ENCODE measurements at regions of chr20 and their contacts with region 1.

Region 1: DNA sequence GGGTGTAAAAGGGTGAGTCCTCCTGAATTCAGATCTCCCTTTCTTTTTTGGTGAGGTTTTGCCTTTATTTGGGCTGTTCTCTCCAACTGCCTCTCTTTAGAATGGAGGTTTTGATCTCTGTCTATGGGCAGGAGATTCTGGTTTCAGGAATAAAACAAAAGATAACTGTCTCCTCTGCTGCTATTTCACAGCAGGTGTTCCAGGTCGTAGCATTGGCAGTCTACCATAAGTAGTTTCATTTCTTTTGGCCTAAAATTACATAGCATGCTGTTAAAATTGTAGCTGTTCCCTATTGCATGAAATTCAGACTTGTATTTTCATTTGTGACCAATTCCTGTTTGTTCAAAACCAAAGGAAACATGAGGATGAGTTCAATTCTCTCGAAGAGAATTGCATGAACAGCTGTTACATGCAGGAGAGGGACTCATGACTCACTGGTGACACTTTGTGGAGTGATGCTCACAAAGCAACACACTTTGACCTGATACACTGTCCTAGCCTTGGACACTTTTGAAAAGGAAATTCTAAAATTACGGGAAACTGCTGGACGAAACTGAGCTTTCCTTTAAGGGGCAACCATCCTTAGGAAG is 76.8 kb upstream of the SIRPG start:
- DNase-seq: no peak
- H3K4me3 ChIP-seq: no peak overlapping the region
- H3K4me3 Mint-ChIP-seq: no peak overlapping the region
- H3K27ac Mint-ChIP-seq: no peak overlapping the region
- H3K4me1 ChIP-seq: no peaks in the 10 kb centered on the region
- H3K4me1 Mint-ChIP-seq: no peaks in the 10 kb centered on the region
- H3K27me3 ChIP-seq: no peaks in the 10 kb centered on the region; the same call in 1 of the 2 replicates
- H3K27me3 Mint-ChIP-seq: peaks cover 17% of the 10 kb centered on the region
- CTCF ChIP-seq: peak in 1 of 2 experiments; percentile 13

Region 2: GRCh38 chr20:1535420-1536175 is 198.8 kb before region 1 on chr20:
- CTCF ChIA-PET with region 1: interaction called, 3 read pairs
- POLR2A ChIA-PET with region 1: no interaction called
- intact Hi-C with region 1: loop called (anchors 10 kb)
- DNase-seq: no peak
- H3K4me3 ChIP-seq: no peak overlapping the region
- H3K4me3 Mint-ChIP-seq: no peak overlapping the region
- H3K27ac Mint-ChIP-seq: no peak overlapping the region
- H3K4me1 ChIP-seq: no peaks in the 10 kb centered on the region
- H3K4me1 Mint-ChIP-seq: no peaks in the 10 kb centered on the region
- H3K27me3 ChIP-seq: no peaks in the 10 kb centered on the region
- H3K27me3 Mint-ChIP-seq: peaks cover 16% of the 10 kb centered on the region
- CTCF ChIP-seq: no peak

Region 3: GRCh38 chr20:1764136-1765033 is 30.0 kb after region 1 on chr20:
- CTCF ChIA-PET with region 1: no interaction called
- POLR2A ChIA-PET with region 1: no interaction called
- intact Hi-C with region 1: no loop called
- DNase-seq: peak; percentile 77 to 83
- H3K4me3 ChIP-seq: no peak overlapping the region
- H3K4me3 Mint-ChIP-seq: no peak overlapping the region
- H3K27ac Mint-ChIP-seq: no peak overlapping the region
- H3K4me1 ChIP-seq: no peaks in the 10 kb centered on the region
- H3K4me1 Mint-ChIP-seq: no peaks in the 10 kb centered on the region
- H3K27me3 ChIP-seq: no peaks in the 10 kb centered on the region
- H3K27me3 Mint-ChIP-seq: peaks cover 9% of the 10 kb centered on the region
- CTCF ChIP-seq: peak; percentile 80 to 92

Region 4: GRCh38 chr20:2289471-2289872 is 555.1 kb after region 1 on chr20:
- CTCF ChIA-PET with region 1: no interaction called
- POLR2A ChIA-PET with region 1: no interaction called
- intact Hi-C with region 1: no loop called
- DNase-seq: peak in 1 of 2 experiments; percentile 29
- H3K4me3 ChIP-seq: no peak overlapping the region
- H3K4me3 Mint-ChIP-seq: peak overlapping the region; percentile 27
- H3K27ac Mint-ChIP-seq: no peak overlapping the region
- H3K4me1 ChIP-seq: peaks cover 9% of the 10 kb centered on the region; the same call in 1 of the 2 replicates
- H3K4me1 Mint-ChIP-seq: peaks cover 8% of the 10 kb centered on the region
- H3K27me3 ChIP-seq: no peaks in the 10 kb centered on the region
- H3K27me3 Mint-ChIP-seq: no peaks in the 10 kb centered on the region
- CTCF ChIP-seq: no peak